Tibial artery (tissue), 4 donors: ENCODE measurements at regions of chr12 and their contacts with region 1.

Region 1: DNA sequence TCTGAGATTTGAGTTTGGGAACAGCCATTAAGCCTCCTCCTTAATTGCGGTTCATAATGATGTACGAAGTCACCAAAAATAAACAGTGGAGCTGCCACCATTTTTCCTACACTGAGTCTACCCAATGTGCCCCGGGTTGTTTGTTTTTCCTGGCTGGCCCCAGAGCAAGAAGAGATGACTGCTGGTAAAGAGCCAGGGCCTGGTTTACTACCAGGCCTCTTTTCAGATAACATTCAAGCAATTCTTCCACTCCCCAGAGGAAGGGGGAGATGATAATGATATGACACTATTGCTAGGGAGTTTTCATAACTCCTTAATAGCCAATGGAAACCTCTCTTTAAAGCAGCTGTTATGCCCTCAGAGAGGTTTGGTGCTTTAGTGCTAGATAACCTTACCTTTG is 42.3 kb downstream of the BRAP start:
- DNase-seq: peak; percentile 32 to 78
- H3K4me3 ChIP-seq: no peak overlapping the region
- H3K27ac ChIP-seq: peak overlapping the region; percentile 73 to 75
- H3K4me1 ChIP-seq: peaks cover 0 to 25% (median 13%) of the 10 kb centered on the region in 4 donors
- H3K27me3 ChIP-seq: no peaks in the 10 kb centered on the region
- CTCF ChIP-seq: no peak

Region 2: DNA sequence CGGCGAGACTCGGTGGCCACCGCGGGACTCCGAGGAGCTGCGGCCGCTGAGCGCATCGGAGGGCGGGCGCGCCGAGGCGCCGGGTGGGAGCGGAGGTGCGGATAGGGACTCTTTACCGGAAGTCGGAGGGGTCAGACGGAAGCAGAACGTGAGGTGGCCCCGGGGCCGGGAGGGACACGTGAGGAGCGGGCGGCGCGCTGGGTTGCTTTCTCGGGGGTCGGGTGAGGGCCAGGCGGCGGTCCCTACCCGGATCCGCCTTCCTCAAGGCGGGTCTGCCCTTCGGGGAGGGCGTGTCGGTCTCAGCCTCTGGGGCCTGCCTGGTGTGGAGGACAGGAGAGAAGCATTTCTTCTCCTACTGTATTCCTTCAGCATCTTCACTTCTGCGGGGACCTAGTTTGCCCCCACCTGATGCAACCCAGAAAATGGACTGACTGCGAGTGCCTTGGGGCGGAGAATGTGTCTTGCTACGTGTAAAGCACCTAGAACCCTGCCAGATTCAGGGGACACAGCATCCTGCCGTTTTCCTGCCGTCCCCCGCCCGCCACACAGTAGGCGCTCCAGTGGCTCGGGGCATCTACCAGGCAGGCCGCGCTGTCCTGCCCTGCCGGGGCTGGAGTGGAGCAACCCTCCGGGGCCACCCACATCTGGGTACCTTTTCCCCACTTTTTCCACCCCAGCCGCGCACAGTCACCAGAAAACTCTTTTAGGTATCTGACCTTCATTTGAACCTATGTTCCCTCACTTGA is 43.8 kb before region 1 on chr12:
- intact Hi-C with region 1: loop called (anchors 2 kb)
- DNase-seq: peak; percentile 91 to 94
- H3K4me3 ChIP-seq: peak overlapping the region; percentile 91 to 95
- H3K27ac ChIP-seq: peak overlapping the region; percentile 92 to 95
- H3K4me1 ChIP-seq: peaks cover 0 to 37% (median 25%) of the 10 kb centered on the region in 4 donors
- H3K27me3 ChIP-seq: no peaks in the 10 kb centered on the region
- CTCF ChIP-seq: no peak